Activated CD4-positive, alpha-beta T cell treated with anti-CD3 and anti-CD28 coated beads, Interleukin-2, amount 10 ng/mL, durations not matched to agents 24 days and 14 days (primary cell): ENCODE measurements at regions of chr3 and their contacts with region 1.

Region 1: GRCh38 chr3:185786956-185787877 is 37.6 kb downstream of the IGF2BP2 start:
- DNase-seq: no peak
- H3K4me3 Mint-ChIP-seq: no peak overlapping the region
- H3K27ac Mint-ChIP-seq: no peak overlapping the region
- H3K4me1 Mint-ChIP-seq: peaks cover 2% of the 10 kb centered on the region
- H3K27me3 Mint-ChIP-seq: peaks cover 27% of the 10 kb centered on the region

Region 2: DNA sequence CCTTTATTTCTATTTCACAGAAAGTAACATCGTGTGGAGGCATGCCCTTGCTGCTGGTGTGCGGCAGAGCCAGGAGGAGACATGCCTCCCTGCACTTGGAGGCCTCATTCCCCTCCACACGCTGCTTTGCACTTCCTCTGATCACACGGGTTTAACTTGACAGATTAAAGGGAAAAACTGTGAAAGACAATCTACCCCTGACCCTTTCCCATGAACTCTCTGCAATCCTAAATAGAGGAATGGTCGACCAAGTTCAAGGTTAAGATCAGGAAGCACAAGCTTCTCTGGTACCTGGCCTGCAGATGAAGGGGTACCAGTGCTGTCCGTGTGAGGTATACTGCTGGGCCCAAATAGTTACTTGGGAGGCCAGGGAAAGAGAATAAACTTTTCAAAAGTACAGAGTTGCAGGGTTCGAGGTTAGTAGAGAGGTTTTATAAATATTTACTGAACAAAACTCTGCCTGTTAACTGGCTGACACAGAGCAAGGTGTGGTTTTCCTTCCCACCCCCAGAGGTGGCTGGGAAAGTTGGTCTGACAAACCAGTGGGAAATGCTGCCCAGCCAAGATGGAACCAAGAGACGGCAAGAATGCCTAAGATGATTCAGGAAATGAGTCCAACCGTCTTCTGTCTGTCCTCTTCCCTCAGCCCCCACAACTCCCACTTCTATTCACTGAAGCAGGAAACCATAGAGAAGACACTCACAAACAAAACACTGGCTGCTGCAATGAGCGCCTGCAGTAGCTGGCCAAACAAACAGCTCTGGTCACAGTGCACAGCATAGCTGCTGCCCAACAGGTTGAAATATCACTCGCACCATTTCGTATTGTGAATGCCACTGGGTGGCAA is 42.0 kb before region 1 on chr3:
- intact Hi-C with region 1: loop called (anchors 2 kb)
- DNase-seq: no peak
- H3K4me3 Mint-ChIP-seq: no peak overlapping the region
- H3K27ac Mint-ChIP-seq: no peak overlapping the region
- H3K4me1 Mint-ChIP-seq: peaks cover 6% of the 10 kb centered on the region
- H3K27me3 Mint-ChIP-seq: peaks cover 18% of the 10 kb centered on the region

Region 3: GRCh38 chr3:185929192-185930151 is 142.3 kb after region 1 on chr3:
- intact Hi-C with region 1: no loop called
- DNase-seq: no peak
- H3K4me3 Mint-ChIP-seq: peak overlapping the region; percentile 98
- H3K27ac Mint-ChIP-seq: peak overlapping the region; percentile 87
- H3K4me1 Mint-ChIP-seq: peaks cover 86% of the 10 kb centered on the region
- H3K27me3 Mint-ChIP-seq: no peaks in the 10 kb centered on the region